ENCODE measurements at regions of chr3 and their contacts with region 1.

Region 1: GRCh38 chr3:157130467-157131251 is 29.3 kb downstream of the CCNL1 start:
- DNase-seq: peak; percentile 47
- H3K4me3 ChIP-seq: no peak overlapping the region
- H3K27ac ChIP-seq: peak overlapping the region; percentile 93 to 94
- H3K4me1 ChIP-seq: peaks cover 44% of the 10 kb centered on the region
- H3K27me3 ChIP-seq: no peaks in the 10 kb centered on the region
- CTCF ChIP-seq: peak; percentile 45 to 78 (median 68)
- POLR2A ChIP-seq: no peak

Region 2: GRCh38 chr3:156547637-156548036 is 583.0 kb before region 1 on chr3:
- intact Hi-C with region 1: loop called (anchors 5 kb)
- DNase-seq: peak; percentile 18
- H3K4me3 ChIP-seq: no peak overlapping the region
- H3K27ac ChIP-seq: peak overlapping the region; percentile 57 to 71
- H3K4me1 ChIP-seq: peaks cover 6% of the 10 kb centered on the region
- H3K27me3 ChIP-seq: no peaks in the 10 kb centered on the region
- CTCF ChIP-seq: no peak
- POLR2A ChIP-seq: no peak

Region 3: DNA sequence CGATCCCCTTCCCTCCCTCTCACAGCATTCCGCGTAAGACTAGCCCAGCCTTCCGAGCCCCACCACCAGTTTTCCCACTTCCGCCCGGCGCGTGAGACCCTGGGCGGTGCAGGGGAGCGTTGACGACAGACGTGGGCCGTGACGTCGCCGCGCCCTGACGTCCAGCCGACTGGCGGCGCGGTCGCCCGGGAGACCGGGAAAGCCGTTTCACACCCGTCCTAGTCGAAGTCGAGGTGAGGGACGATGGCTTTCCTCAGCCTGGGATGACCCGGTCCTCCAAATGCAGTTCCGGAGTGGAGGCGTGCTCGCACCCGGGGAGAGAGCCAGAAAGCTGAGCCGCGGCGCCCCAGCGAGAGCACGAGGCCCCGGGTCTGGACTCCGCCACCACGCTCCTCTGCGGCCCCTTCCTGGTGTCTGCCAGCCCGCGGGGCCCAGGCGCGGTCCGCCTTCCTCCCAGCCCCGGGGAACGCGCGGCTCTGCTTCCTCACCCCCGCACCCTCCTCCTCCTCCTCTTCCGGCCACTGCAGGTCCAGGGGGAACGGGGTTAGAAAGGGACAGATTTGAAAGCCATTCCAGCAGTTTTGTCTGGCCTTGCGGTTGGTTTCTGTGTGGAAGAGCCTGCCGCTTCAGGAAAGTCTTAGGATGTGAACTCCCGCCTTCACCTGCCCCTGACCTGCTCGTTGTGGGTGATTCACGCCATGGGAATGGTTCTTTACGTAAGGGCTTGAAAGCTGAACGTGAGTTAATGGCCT is 304.3 kb before region 1 on chr3 and contains the start of gene LEKR1:
- intact Hi-C with region 1: loop called (anchors 5 kb)
- DNase-seq: peak; percentile 65
- H3K4me3 ChIP-seq: peak within 1 kb of the TSS; percentile 51 to 71
- H3K27ac ChIP-seq: peak within 1 kb of the TSS; percentile 91 to 97
- H3K4me1 ChIP-seq: no peaks in the 10 kb centered on the region
- H3K27me3 ChIP-seq: no peaks in the 10 kb centered on the region
- CTCF ChIP-seq: peak in 1 of 4 experiments; percentile 29
- POLR2A ChIP-seq: peak; percentile 64
- total RNA-seq, gene LEKR1: 2.2 to 4.4 TPM

Region 4: GRCh38 chr3:156978481-156978961 is 152.1 kb before region 1 on chr3:
- intact Hi-C with region 1: no loop called
- DNase-seq: no peak
- H3K4me3 ChIP-seq: no peak overlapping the region
- H3K27ac ChIP-seq: no peak overlapping the region
- H3K4me1 ChIP-seq: no peaks in the 10 kb centered on the region
- H3K27me3 ChIP-seq: no peaks in the 10 kb centered on the region
- CTCF ChIP-seq: no peak
- POLR2A ChIP-seq: no peak

Region 5: GRCh38 chr3:157045238-157045850 is 85.3 kb before region 1 on chr3:
- intact Hi-C with region 1: no loop called
- DNase-seq: no peak
- H3K4me3 ChIP-seq: no peak overlapping the region
- H3K27ac ChIP-seq: no peak overlapping the region
- H3K4me1 ChIP-seq: no peaks in the 10 kb centered on the region
- H3K27me3 ChIP-seq: no peaks in the 10 kb centered on the region
- CTCF ChIP-seq: no peak
- POLR2A ChIP-seq: no peak

Measured in prostate gland (tissue), 2 donors.